ENCODE measurements at regions of chr20 and their contacts with region 1.

Region 1: GRCh38 chr20:9212735-9213134 is 143.8 kb downstream of the PLCB4 start:
- DNase-seq: no peak
- H3K4me3 ChIP-seq: no peak overlapping the region
- H3K27ac ChIP-seq: no peak overlapping the region
- H3K4me1 ChIP-seq: no peaks in the 10 kb centered on the region
- H3K27me3 ChIP-seq: no peaks in the 10 kb centered on the region
- CTCF ChIP-seq: no peak
- POLR2A ChIP-seq: no peak

Region 2: GRCh38 chr20:9078826-9079731 is 133.7 kb before region 1 on chr20:
- intact Hi-C with region 1: no loop called
- DNase-seq: no peak
- H3K4me3 ChIP-seq: no peak overlapping the region
- H3K27ac ChIP-seq: no peak overlapping the region
- H3K4me1 ChIP-seq: no peaks in the 10 kb centered on the region
- H3K27me3 ChIP-seq: no peaks in the 10 kb centered on the region
- CTCF ChIP-seq: no peak
- POLR2A ChIP-seq: no peak

Region 3: DNA sequence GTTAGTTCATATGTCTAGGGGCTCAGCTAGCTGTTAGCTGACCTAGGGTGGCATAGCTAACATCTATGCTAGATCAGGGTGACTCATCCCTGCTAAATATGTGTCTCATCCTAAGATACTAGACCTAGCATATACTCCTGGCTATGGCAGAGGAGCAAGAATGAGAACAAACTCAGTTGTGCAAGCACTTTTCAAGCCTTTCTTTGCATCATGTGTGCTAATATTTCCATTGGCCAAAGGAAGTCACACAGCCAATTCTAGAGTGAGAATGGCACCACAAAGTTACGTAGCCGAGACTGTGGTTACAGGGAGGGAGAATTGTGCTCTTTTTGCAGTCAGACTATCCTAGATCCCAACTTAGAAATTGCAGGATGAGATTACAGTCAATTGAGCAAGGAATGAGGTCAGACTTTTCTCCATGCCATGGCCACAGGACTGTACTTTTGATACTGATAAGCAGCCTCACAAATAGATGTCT is 65.1 kb before region 1 on chr20:
- intact Hi-C with region 1: loop called (anchors 2 kb)
- DNase-seq: no peak
- H3K4me3 ChIP-seq: no peak overlapping the region
- H3K27ac ChIP-seq: no peak overlapping the region
- H3K4me1 ChIP-seq: no peaks in the 10 kb centered on the region
- H3K27me3 ChIP-seq: no peaks in the 10 kb centered on the region
- CTCF ChIP-seq: no peak
- POLR2A ChIP-seq: no peak

Region 4: DNA sequence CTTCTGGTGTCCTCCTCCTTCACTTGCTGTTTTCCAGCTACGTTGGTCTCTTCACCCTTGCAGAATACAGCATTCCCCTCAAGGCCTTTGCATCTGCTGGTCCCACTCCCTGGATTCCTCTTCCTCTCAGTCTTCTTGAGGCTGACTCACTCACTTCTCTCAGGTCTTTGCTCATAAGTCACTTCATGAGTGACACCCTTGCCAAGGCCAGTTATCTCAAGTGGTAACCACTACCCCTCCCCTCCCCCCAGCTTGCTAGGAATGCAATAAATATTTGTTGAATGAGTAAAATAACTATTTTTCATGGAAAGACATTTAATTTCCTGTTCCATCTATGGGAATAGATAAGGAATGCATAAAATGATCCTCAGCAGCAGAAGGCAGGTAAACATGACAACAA is 12.1 kb before region 1 on chr20:
- intact Hi-C with region 1: no loop called
- DNase-seq: no peak
- H3K4me3 ChIP-seq: no peak overlapping the region
- H3K27ac ChIP-seq: no peak overlapping the region
- H3K4me1 ChIP-seq: no peaks in the 10 kb centered on the region
- H3K27me3 ChIP-seq: no peaks in the 10 kb centered on the region
- CTCF ChIP-seq: no peak
- POLR2A ChIP-seq: no peak